A549 (cell line): ENCODE measurements at regions of chr4 and their contacts with region 1.

Region 1: GRCh38 chr4:170248576-170248975 is 158.8 kb upstream of the AADAT start:
- DNase-seq: no peak
- ATAC-seq: no peak
- H3K4me3 ChIP-seq: no peak overlapping the region
- H3K27ac ChIP-seq: no peak overlapping the region
- H3K4me1 ChIP-seq: no peaks in the 10 kb centered on the region
- CTCF ChIP-seq: no peak
- EP300 ChIP-seq: no peak
- POLR2A ChIP-seq: no peak
- RAD21 ChIP-seq: no peak

Region 2: DNA sequence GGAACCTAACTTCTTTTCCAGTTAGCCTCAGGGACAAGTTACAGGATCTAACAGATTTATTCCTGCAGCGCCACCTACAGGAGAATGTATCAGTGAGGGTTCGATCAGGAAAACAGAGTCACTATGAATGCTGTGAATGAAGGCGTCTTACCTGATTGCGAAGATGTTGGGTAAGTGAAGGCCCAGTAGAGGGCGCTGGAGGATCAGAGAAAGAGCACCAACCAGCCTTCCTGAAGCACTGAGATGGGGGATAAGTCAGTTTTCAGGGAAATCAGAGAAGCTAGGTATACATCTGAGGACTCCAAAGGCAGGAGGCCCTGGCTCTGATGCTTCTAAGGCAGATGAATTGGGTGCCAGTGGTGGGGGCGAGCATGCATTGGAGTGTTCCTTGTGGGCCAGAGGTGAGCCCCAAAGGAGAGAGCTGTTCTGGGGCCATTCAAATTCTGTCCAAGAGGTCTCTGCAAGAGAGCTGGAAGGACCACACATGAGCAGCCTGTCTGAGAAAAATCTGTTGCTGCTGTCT is 11.1 kb after region 1 on chr4:
- CTCF ChIA-PET with region 1: interaction called, 24 read pairs
- POLR2A ChIA-PET with region 1: no interaction called
- DNase-seq: peak; percentile 8 to 86
- ATAC-seq: peak; percentile 64 to 100; a peak in 5 of 6 replicates
- H3K4me3 ChIP-seq: no peak overlapping the region
- H3K27ac ChIP-seq: no peak overlapping the region
- H3K4me1 ChIP-seq: no peaks in the 10 kb centered on the region
- CTCF ChIP-seq: peak; percentile 57
- EP300 ChIP-seq: no peak
- POLR2A ChIP-seq: no peak
- RAD21 ChIP-seq: peak; percentile 67 to 79

Region 3: GRCh38 chr4:170374770-170375169 is 126.2 kb after region 1 on chr4:
- CTCF ChIA-PET with region 1: no interaction called
- POLR2A ChIA-PET with region 1: no interaction called
- DNase-seq: peak; percentile 1 to 33
- ATAC-seq: peak in 1 of 2 experiments; percentile 69; a peak in 3 of 6 replicates
- H3K4me3 ChIP-seq: no peak overlapping the region
- H3K27ac ChIP-seq: no peak overlapping the region
- H3K4me1 ChIP-seq: no peaks in the 10 kb centered on the region
- CTCF ChIP-seq: no peak
- EP300 ChIP-seq: no peak
- POLR2A ChIP-seq: no peak
- RAD21 ChIP-seq: no peak